ENCODE measurements at regions of chr18 and their contacts with region 1.

Region 1: GRCh38 chr18:24726727-24727492 is 266.5 kb downstream of the HRH4 start:
- DNase-seq: no peak
- H3K4me3 ChIP-seq: peak overlapping the region; percentile 36
- H3K27me3 ChIP-seq: peaks cover 13% of the 10 kb centered on the region
- CTCF ChIP-seq: peak; percentile 85

Region 2: DNA sequence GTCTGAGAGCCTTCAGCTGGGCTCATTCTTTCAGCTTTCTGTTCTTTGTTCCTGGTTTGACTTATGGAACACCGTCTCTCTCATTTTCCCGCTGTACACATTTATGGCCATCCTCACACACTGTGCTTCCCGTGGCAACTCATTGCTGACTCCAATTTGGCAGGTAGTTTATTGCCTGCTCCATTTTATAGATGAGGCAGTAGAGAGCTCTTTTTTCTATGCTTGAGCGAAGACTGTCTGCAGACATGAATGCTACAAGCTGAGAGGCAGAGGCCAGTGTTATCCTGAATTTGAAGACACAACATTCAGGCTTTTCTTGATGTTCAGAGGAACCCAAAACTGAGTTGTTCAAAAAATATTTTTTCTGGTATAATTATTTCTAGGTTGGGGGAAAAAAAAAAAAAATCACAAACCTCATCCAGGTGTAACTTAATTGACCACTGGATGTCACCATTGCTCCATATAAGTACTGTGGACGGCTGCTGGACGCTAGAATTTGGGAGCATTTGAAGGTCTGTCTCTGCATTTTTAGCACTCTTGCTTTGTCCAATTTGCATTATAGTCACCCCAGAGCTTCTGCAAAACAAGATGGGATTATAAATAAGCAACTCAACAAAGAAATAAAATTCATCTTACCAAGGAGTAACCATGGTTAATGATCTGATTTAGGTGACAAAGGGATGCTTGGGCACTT is 183.0 kb before region 1 on chr18:
- CTCF ChIA-PET with region 1: interaction called, 17 read pairs
- POLR2A ChIA-PET with region 1: no interaction called
- DNase-seq: no peak
- H3K4me3 ChIP-seq: no peak overlapping the region
- H3K27me3 ChIP-seq: no peaks in the 10 kb centered on the region; the same call in none of the 2 replicates
- CTCF ChIP-seq: peak; percentile 41; the same call in 1 of the 2 replicates

Region 3: DNA sequence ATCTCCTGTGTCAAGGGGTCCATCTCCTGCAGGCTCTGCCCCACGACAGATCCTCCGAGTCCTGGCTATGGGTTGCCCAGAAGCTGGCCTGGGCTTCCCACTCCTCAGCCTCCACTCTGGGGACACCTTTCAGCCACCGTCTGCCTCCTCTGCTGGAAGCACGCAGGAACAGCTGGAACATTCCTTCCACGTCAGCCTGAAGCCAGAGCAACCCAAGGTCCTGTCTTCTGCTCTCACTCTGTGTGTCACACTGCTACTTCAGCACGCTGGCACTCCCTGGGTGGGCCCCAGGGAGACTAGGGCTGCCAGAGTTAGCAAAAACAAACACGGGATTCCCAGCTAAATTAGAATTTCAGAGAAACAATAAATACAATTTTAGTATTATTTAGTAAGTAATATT is 117.7 kb before region 1 on chr18:
- CTCF ChIA-PET with region 1: interaction called, 17 read pairs
- POLR2A ChIA-PET with region 1: no interaction called
- DNase-seq: no peak
- H3K4me3 ChIP-seq: no peak overlapping the region
- H3K27me3 ChIP-seq: no peaks in the 10 kb centered on the region; the same call in 1 of the 2 replicates
- CTCF ChIP-seq: no peak

Region 4: DNA sequence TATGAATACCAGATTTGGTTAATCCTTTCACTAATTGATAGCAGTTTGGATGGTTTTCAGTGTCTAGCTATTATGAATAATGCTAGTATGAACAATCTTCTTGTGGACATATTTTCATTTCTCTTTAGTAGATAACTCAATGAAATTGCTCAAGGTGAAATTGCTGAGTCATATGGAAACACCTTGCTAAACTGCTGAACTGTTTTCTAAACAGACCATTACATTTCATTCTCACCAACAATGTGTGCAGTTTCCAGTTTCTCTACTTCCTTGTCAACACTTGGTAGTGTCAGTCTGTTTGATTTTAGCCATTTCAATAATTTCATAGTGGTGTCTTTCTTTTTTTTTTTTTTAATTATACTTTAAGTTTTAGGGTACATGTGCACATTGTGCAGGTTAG is 16.4 kb before region 1 on chr18:
- CTCF ChIA-PET with region 1: interaction called, 10 read pairs
- POLR2A ChIA-PET with region 1: no interaction called
- DNase-seq: no peak
- H3K4me3 ChIP-seq: no peak overlapping the region
- H3K27me3 ChIP-seq: no peaks in the 10 kb centered on the region
- CTCF ChIP-seq: no peak

Measured in BJ (cell line).